ENCODE measurements at regions of chr4 and their contacts with region 1.

Region 1: DNA sequence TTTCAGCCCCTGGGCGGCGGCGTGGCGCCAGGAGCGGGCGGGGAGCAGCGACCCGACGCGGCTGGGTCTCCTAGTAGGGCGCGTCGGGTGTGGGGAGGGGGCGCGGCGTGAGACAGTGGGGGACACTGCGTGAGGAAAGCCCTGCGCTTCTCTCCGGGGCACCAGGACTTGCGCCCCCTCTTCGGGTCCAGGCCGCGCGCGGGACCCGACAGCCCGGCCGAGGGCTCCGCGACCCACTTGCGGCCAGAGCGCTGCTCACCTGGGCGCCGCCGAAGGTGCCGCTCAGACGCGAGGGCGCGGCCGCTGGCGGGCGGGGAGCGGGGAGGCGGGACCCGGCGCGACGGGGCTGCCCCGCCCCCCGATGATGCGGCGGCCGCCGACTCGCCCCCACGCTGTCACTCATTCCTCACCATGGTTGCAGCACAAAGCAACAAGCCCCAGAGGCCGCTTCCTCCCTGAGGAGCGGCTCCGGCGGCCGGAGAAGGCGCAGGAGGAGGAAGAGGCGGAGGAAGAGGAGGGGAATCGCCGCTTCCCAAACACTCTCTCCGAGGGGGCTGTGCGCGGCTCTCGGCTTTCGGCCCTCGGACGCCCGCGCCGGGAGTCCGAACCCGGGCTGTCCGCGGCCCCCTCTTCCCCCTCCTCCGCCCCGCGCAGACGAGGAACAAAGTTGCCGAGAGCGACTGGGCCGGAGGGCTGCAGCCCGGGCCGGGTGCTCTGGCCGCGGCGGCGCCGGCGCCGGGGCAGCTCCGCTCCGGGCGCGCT is at the start of gene RAPGEF2:
- DNase-seq: peak; percentile 91
- H3K4me3 Mint-ChIP-seq: peak within 1 kb of the TSS; percentile 80
- H3K27ac Mint-ChIP-seq: peak within 1 kb of the TSS; percentile 88
- H3K4me1 Mint-ChIP-seq: peaks cover 47% of the 10 kb centered on the region
- H3K27me3 Mint-ChIP-seq: no peaks in the 10 kb centered on the region
- total RNA-seq, gene RAPGEF2: 21.2 to 26.1 TPM

Region 2: DNA sequence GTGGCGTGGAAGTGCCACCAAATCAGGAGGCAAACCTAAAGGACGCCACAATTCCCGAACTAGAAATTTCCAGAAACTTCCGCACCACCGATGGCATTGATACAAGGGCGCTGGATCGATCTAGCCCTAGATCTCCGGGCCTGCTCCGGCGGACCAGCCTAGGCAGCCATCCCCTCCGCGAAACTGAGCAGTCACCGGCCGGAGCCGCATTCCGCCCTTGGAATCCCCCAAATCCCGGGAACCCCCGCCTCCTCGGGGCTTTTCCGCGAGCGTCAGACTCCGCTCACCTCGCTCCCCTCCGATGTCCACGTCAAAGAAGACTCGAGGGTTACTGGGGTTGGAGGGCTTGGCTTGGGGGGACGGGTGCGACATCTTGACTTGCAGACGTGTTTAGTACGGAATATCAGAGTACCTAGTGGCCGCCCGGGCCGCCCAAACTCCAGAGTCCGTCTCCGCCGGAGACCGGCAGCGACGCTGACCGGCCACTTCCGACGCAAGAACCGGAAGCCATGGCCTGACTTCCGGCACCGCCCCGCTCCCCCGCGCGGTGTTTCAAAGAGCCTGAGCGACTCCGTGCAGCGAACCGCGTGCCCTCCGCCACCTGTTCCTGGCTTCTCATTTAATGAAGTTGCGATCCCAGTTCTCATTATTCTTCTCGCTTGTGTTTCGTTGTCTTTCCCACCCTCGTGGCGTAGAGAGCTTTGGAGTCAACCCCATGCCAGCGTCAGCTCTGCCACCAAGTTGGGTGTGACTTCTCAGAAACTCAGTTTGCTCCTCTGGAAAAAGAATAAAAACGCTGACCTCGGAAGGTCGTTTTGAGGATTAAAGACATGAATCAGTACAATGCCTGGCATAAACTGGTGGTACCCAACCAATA is 379.6 kb before region 1 on chr4 and contains the start of gene PPID:
- CTCF ChIA-PET with region 1: no interaction called
- intact Hi-C with region 1: loop called (anchors 1 kb)
- DNase-seq: peak; percentile 88
- H3K4me3 Mint-ChIP-seq: peak within 1 kb of the TSS; percentile 98
- H3K27ac Mint-ChIP-seq: peak within 1 kb of the TSS; percentile 99
- H3K4me1 Mint-ChIP-seq: peaks cover 41% of the 10 kb centered on the region
- H3K27me3 Mint-ChIP-seq: no peaks in the 10 kb centered on the region
- total RNA-seq, gene PPID: 55.4 to 55.6 TPM

Region 3: GRCh38 chr4:158768555-158769174 is 334.1 kb before region 1 on chr4 and contains the start of gene FNIP2:
- CTCF ChIA-PET with region 1: no interaction called
- intact Hi-C with region 1: loop called (anchors 1 kb)
- DNase-seq: peak; percentile 73
- H3K4me3 Mint-ChIP-seq: peak within 1 kb of the TSS; percentile 96
- H3K27ac Mint-ChIP-seq: peak within 1 kb of the TSS; percentile 90
- H3K4me1 Mint-ChIP-seq: peaks cover 39% of the 10 kb centered on the region
- H3K27me3 Mint-ChIP-seq: no peaks in the 10 kb centered on the region
- total RNA-seq, gene FNIP2: 10.1 to 11.3 TPM

Region 4: GRCh38 chr4:158856852-158857251 is 246.0 kb before region 1 on chr4:
- CTCF ChIA-PET with region 1: interaction called, 4 read pairs
- intact Hi-C with region 1: loop called (anchors 5 kb)
- DNase-seq: no peak
- H3K4me3 Mint-ChIP-seq: no peak overlapping the region
- H3K27ac Mint-ChIP-seq: no peak overlapping the region
- H3K4me1 Mint-ChIP-seq: no peaks in the 10 kb centered on the region
- H3K27me3 Mint-ChIP-seq: no peaks in the 10 kb centered on the region

Region 5: DNA sequence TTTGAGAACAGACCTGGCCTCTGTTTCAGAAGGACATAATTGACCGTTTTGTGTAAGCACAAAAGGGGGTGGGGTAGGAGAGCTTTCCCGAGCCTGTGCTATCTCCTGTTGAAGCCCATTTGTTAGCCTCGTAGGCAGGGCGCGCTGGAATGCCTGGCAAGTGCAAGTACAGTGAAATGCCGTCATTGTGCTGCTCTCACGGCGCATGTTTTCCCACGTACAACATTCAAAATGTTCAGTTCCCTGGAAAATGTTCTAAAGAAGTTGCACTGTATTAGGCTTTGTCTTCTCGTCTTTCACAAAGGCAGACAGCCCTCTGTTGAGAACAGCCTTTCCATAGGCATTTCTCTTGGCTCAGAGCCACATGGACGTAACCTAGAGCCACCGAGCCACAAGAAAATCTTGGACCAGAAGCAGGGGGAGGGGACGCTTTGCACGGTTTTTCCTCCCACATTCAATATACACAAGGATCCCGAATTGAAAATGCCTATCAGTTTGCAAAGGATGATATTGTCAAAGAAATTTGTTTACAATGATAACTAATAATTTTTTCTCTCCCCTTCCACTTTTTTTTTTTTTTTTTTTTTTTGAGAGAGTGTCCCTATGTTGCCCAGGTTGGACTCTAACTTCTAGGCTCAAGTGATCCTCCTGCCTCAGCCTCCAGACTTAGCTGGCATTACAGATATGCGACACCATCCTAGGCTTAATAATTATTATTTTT is 54.5 kb before region 1 on chr4:
- CTCF ChIA-PET with region 1: no interaction called
- intact Hi-C with region 1: no loop called
- DNase-seq: no peak
- H3K4me3 Mint-ChIP-seq: no peak overlapping the region
- H3K27ac Mint-ChIP-seq: no peak overlapping the region
- H3K4me1 Mint-ChIP-seq: peaks cover 15% of the 10 kb centered on the region
- H3K27me3 Mint-ChIP-seq: peaks cover 6% of the 10 kb centered on the region

Region 6: DNA sequence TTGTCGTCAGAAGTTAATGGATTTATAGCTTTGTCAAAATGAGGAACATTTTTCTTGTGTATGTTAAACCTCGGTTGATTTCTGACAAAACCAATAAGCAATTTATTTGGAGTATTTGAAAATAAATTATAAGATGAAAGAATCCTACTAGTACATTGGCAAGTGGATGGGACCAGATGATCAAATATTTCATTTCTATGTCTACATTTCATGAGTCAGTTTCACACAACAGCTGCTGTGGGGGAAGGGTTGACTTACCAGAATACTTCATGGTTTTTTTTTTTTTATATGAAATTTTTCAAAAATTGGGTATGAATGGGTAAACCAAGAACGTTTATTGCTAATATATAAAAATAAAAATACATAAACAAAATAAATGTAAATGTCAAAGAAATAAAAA is 39.4 kb after region 1 on chr4:
- CTCF ChIA-PET with region 1: no interaction called
- intact Hi-C with region 1: loop called (anchors 1 kb)
- DNase-seq: peak; percentile 45
- H3K4me3 Mint-ChIP-seq: no peak overlapping the region
- H3K27ac Mint-ChIP-seq: no peak overlapping the region
- H3K4me1 Mint-ChIP-seq: peaks cover 25% of the 10 kb centered on the region
- H3K27me3 Mint-ChIP-seq: no peaks in the 10 kb centered on the region